CD14-positive monocyte (primary cell): ENCODE measurements at regions of chr10 and their contacts with region 1.

Region 1: DNA sequence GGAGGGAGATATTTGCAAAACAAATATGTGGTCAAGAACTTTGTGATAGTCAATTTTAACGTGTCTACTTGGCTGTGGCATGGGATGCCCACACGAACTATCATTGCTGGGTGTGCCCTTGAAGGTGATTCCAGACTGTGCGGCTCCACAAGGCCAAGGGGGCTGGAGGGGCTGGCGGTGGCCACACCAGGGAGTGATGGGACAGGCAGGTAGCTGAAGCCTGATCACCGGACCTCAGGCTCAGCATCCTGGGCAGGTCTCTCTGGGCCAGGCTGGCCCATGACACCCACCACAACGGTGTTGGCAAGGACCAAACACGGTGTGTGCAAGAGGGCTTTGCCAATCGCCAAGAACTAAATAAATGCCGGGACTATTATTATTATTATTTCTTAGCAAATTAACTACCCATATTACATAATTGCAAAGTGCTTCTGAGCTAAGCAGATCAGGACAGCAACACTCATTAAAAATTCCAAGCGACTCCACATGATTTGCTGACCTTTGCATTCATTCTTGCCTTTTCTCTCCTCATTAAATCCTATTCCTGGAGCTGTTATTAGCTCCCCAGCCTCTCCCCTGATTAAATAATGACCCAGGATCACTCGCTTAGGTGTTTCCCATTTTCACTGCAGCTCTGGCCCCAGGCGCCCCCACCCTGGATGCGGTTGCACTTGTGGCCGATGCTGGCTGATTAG is 35.4 kb upstream of the PPP2R2D start:
- DNase-seq: no peak
- H3K4me3 ChIP-seq: no peak overlapping the region
- H3K4me3 Mint-ChIP-seq: no peak overlapping the region
- H3K27ac ChIP-seq: no peak overlapping the region
- H3K27ac Mint-ChIP-seq: no peak overlapping the region
- H3K4me1 ChIP-seq: no peaks in the 10 kb centered on the region
- H3K4me1 Mint-ChIP-seq: no peaks in the 10 kb centered on the region
- H3K27me3 ChIP-seq: no peaks in the 10 kb centered on the region
- H3K27me3 Mint-ChIP-seq: peaks cover 2 to 19% (median 17%) of the 10 kb centered on the region in 3 donors
- CTCF ChIP-seq: no peak

Region 2: GRCh38 chr10:131461093-131461492 is 404.3 kb before region 1 on chr10:
- intact Hi-C with region 1: loop called in 1 of 2 experiments (anchors 5 kb)
- DNase-seq: no peak
- H3K4me3 ChIP-seq: no peak overlapping the region
- H3K4me3 Mint-ChIP-seq: no peak overlapping the region
- H3K27ac ChIP-seq: no peak overlapping the region
- H3K27ac Mint-ChIP-seq: no peak overlapping the region
- H3K4me1 ChIP-seq: no peaks in the 10 kb centered on the region
- H3K4me1 Mint-ChIP-seq: no peaks in the 10 kb centered on the region
- H3K27me3 ChIP-seq: no peaks in the 10 kb centered on the region
- H3K27me3 Mint-ChIP-seq: peaks cover 2 to 7% (median 2%) of the 10 kb centered on the region in 3 donors
- CTCF ChIP-seq: no peak